ENCODE measurements at regions of chr22 and their contacts with region 1.

Region 1: GRCh38 chr22:38317122-38317994 is at the start of gene CSNK1E:
- DNase-seq: peak; percentile 64
- H3K4me3 ChIP-seq: peak within 1 kb of the TSS; percentile 75 to 92 (median 77)
- H3K27ac ChIP-seq: peak within 1 kb of the TSS; percentile 94
- H3K4me1 ChIP-seq: peaks cover 49% of the 10 kb centered on the region
- H3K27me3 ChIP-seq: no peaks in the 10 kb centered on the region
- CTCF ChIP-seq: no peak
- total RNA-seq, gene CSNK1E: 156 to 370 TPM

Region 2: DNA sequence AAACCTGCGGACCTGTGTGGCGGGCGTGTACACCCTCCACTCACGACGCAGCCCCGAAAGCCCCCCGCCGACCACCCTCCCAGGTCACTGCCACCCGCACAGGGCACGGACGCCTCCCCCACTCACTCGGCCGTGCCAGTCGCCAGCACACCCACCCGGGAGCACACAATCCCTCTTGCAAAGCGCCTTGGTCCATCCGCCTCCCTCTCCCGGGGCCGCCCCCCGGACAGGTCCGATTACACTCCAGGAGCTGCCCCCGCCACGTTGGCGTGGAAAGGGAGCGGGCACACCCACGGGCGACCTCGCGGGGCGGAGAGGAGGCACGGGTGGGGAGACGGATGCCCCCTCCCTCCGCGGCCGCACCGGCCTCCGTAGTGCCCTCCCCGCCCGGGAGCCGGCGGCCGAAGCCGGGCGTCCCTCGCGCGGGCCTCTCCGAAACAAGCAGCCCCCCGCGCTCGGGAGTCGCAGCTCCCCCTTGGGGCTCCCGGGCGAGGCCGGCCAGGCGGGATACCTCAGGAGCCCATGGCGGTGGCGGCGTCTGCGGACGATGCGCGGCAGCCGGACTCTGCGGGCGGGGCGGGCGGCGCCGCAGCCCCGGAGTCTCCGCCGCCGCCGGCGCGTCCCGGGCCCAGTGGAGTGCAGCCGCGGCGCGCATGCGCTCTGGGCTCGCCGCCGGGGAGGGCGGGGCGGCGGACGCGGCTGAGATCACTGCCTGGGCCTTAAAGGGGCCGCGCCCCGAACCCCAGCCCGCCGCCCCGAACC is 44.8 kb before region 1 on chr22 and contains the start of gene TMEM184B:
- CTCF ChIA-PET with region 1: no interaction called
- dilution Hi-C with region 1: no loop called
- in situ Hi-C with region 1: no loop called
- intact Hi-C with region 1: loop called (anchors 2 kb)
- DNase-seq: peak; percentile 67
- H3K4me3 ChIP-seq: peak within 1 kb of the TSS; percentile 68 to 92 (median 84)
- H3K27ac ChIP-seq: peak within 1 kb of the TSS; percentile 55
- H3K4me1 ChIP-seq: peaks cover 24% of the 10 kb centered on the region
- H3K27me3 ChIP-seq: no peaks in the 10 kb centered on the region
- CTCF ChIP-seq: no peak
- total RNA-seq, gene TMEM184B: 26.2 to 68.5 TPM

Region 3: DNA sequence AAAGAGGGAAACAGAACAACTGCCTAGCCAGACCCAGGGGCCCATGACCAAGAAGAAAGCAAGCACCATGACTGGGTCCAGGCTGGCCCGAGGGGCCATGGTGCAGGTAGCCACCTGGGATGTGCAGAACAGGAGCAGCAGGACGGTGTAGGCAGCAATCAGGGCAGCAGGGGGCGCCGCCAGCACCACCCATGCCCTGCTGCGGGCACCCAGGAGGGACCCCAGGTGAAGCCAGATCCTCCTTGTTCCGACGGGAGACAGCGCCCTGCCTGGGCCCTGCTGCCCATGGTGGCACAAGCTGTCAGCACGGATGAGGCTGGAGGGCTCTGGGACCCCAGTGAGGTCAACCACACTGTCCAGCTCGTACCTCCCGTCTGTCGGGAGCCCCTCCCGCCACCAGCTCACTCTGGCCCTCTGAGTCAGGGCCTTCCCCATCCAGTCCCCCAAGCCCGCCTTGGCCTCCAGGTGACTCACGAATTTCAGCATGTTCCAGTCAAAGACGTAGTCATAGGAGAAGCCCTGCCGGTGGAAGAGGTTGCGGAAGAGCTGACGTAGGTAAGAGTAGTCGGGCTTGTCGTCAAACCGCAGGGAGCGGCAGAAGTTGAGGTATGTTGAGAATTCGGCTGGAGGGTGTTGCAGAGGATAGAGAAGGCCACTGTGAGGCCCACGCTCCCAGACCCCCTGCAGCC is 18.9 kb before region 1 on chr22:
- CTCF ChIA-PET with region 1: no interaction called
- dilution Hi-C with region 1: no loop called
- in situ Hi-C with region 1: no loop called
- intact Hi-C with region 1: loop called (anchors 1 kb)
- DNase-seq: peak; percentile 100
- H3K4me3 ChIP-seq: no peak overlapping the region
- H3K27ac ChIP-seq: peak overlapping the region; percentile 93
- H3K4me1 ChIP-seq: peaks cover 55% of the 10 kb centered on the region
- H3K27me3 ChIP-seq: no peaks in the 10 kb centered on the region
- CTCF ChIP-seq: peak; percentile 59

Region 4: DNA sequence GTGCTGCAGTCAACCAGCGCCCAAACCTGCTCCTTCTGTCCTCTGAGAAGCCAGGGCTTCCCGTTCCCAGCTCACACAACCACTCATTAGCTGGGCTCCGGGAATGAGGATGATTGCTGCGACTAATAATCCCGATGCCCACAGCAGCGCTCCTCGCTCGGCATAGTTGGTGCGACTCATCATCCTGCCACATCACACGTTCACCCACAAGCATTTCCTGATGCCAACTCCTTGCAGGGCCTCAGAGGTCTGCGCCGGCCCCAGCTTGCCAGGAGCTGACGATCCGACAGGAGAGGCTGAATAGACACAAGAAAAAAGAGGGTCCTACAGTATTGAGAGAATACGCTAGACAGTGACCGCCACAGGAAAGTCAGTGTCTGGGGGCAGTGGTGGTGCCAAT is 10.4 kb after region 1 on chr22:
- CTCF ChIA-PET with region 1: no interaction called
- dilution Hi-C with region 1: no loop called
- in situ Hi-C with region 1: no loop called
- intact Hi-C with region 1: loop called (anchors 1 kb)
- DNase-seq: peak; percentile 94
- H3K4me3 ChIP-seq: peak overlapping the region; percentile 30 to 48 (median 47)
- H3K27ac ChIP-seq: peak overlapping the region; percentile 89
- H3K4me1 ChIP-seq: peaks cover 20% of the 10 kb centered on the region
- H3K27me3 ChIP-seq: no peaks in the 10 kb centered on the region
- CTCF ChIP-seq: no peak

Region 5: DNA sequence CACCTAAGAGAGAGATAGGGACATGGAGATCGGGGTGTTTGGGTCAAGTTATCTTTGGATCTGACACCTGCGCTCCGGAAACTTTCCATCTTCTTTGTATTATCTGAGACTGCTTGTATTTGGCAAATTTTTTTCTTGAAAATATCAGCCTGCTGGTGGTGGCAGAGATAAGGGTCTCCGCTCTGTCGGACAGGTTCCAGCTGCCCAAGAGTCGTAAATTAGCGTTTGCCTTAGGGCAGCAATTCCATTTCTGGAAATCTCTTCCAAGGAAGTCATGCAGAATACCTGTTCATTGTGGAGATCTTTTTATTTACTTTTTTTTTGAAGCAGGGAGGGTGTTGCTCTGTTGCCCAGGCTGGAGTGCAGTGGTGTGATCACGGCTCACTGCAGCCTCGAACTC is 19.3 kb after region 1 on chr22:
- CTCF ChIA-PET with region 1: no interaction called
- dilution Hi-C with region 1: no loop called
- in situ Hi-C with region 1: no loop called
- intact Hi-C with region 1: loop called (anchors 1 kb)
- DNase-seq: no peak
- H3K4me3 ChIP-seq: peak overlapping the region in 2 of 3 experiments; percentile 40 to 51
- H3K27ac ChIP-seq: peak overlapping the region; percentile 56
- H3K4me1 ChIP-seq: peaks cover 4% of the 10 kb centered on the region
- H3K27me3 ChIP-seq: no peaks in the 10 kb centered on the region
- CTCF ChIP-seq: no peak

Region 6: DNA sequence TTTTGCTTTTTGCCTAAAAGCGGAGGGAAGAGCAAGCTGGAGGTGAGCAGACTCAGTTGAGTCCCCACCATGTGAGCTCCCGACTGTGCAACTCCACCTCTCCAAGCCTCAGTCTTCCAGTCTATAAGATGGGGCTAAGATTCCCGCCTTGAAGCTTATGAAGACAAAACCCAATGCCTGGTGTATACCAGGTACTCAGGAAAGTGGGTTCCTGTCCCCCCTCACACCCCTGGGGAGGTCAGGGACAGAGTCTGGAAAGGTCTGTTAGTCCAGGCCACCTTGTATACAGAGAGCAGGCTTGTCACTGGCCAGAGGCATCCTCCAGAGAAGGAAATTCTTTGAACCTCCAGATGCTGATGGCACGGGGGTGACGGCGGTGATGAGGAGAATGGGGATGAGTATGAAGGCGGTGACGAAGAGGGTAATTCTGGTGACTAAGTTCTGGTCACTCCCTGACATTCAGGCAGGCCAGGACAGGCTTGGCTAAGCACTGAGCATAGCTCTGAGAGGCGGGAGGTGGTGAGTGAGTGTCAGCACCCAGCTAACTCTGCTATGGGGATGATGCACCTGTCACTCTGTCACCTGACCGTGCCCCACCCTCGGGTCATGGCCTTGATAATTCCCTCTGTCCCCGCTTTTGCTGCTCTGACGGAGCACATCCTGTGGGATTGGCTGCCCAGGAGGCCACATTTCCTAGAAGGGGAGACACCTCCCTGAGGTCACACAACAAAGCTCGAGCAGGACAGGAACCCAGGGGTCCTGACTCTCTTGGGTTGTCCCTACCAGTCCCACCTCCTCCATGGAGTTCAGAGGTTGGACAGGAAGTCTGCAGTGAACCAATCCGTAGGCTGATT is 30.8 kb after region 1 on chr22:
- CTCF ChIA-PET with region 1: no interaction called
- dilution Hi-C with region 1: loop called (anchors 5 kb)
- in situ Hi-C with region 1: no loop called
- intact Hi-C with region 1: loop called (anchors 1 kb)
- DNase-seq: peak; percentile 97
- H3K4me3 ChIP-seq: no peak overlapping the region
- H3K27ac ChIP-seq: peak overlapping the region; percentile 49
- H3K4me1 ChIP-seq: peaks cover 17% of the 10 kb centered on the region
- H3K27me3 ChIP-seq: no peaks in the 10 kb centered on the region
- CTCF ChIP-seq: no peak

Measured in mammary epithelial cell (primary cell).